Aorta (tissue), 5 donors: ENCODE measurements at regions of chr6 and their contacts with region 1.

Region 1: GRCh38 chr6:32107406-32107805 is 1.7 kb downstream of the TNXB start:
- DNase-seq: peak; percentile 70 to 79
- ATAC-seq: no peak
- H3K4me3 ChIP-seq: no peak overlapping the region
- H3K27ac ChIP-seq: peak overlapping the region in 1 of 2 donors; percentile 73
- H3K4me1 ChIP-seq: peaks cover 0 to 5% of the 10 kb centered on the region in 2 donors
- H3K27me3 ChIP-seq: no peaks in the 10 kb centered on the region

Region 2: GRCh38 chr6:31729515-31729978 is 377.9 kb before region 1 on chr6:
- intact Hi-C with region 1: no loop called
- DNase-seq: peak; percentile 96 to 97
- ATAC-seq: peak; percentile 93
- H3K4me3 ChIP-seq: peak overlapping the region; percentile 83 to 92
- H3K27ac ChIP-seq: peak overlapping the region; percentile 88 to 94
- H3K4me1 ChIP-seq: no peaks in the 10 kb centered on the region
- H3K27me3 ChIP-seq: no peaks in the 10 kb centered on the region

Region 3: DNA sequence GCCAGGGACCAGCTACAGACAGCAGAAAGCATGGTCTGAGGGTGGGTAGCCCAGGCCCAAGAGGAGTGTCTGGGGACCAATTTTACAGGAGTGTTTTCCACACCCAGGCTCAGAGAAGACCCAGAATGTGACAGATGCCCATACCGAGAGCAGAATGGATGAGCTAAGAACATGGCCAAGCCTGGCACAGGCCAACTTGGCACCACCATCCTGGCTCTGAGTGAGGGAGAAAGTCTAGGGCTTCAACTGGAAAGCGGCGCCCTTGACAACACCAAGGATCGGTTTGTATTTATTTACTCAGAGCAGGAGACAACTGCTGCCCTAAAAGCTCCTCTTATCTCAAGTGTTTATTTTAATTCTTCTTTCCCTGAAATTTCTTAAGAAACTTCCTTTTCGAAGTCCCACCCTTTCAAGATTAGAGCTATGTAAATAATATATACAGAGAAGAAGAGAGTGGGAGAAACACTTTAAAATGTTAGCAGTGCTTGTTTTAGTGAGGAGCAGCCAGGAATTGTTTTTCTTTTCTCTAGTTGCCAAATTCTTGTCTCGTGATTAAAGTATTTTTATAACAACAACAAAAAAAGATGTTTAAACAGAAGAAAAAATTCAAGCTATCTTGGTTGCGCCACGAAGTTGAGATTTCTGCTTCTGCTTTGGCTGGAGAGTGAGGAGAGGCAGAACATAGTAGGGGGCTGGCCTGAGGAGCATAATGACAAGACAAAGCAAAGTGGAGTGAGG is 14.5 kb before region 1 on chr6:
- intact Hi-C with region 1: loop called in 1 of 2 experiments (anchors 2 kb)
- DNase-seq: peak; percentile 74 to 80
- ATAC-seq: peak; percentile 56
- H3K4me3 ChIP-seq: no peak overlapping the region
- H3K27ac ChIP-seq: peak overlapping the region; percentile 52 to 78
- H3K4me1 ChIP-seq: peaks cover 0 to 4% of the 10 kb centered on the region in 2 donors
- H3K27me3 ChIP-seq: no peaks in the 10 kb centered on the region

Region 4: DNA sequence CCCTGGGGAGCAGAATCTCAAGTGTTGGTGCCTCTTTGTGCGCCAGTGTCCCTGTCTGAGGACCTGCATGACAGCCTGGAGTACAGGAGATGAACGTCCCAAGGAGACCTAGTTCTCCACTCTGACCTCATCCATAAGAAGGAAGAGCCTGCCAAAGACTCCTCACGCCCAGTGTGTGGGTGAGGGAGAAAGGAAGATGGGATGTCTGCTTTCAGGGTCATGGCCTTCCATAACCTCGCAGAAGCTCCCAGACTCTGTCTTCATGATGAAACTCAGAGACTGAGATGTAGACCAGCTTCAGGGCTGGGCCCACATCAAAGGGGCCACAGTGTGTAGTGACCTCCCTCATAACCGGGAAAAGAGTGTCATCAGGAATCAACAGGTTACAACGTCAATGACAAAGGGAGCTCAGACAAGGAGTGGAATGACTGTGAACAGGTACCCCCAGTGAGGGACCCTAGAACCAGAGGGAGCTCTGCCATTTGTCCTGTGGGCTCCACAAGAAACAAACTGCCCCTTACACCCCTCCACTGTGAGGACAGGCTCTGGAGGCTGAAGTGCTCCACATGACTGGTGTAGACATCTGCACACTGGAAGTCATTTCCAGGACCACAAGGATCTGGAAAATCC is 551.0 kb after region 1 on chr6:
- intact Hi-C with region 1: no loop called
- DNase-seq: no peak
- ATAC-seq: no peak
- H3K4me3 ChIP-seq: no peak overlapping the region
- H3K27ac ChIP-seq: no peak overlapping the region
- H3K4me1 ChIP-seq: no peaks in the 10 kb centered on the region
- H3K27me3 ChIP-seq: peaks cover 0 to 1% of the 10 kb centered on the region in 2 donors